ENCODE measurements at regions of chr3 and their contacts with region 1.

Region 1: DNA sequence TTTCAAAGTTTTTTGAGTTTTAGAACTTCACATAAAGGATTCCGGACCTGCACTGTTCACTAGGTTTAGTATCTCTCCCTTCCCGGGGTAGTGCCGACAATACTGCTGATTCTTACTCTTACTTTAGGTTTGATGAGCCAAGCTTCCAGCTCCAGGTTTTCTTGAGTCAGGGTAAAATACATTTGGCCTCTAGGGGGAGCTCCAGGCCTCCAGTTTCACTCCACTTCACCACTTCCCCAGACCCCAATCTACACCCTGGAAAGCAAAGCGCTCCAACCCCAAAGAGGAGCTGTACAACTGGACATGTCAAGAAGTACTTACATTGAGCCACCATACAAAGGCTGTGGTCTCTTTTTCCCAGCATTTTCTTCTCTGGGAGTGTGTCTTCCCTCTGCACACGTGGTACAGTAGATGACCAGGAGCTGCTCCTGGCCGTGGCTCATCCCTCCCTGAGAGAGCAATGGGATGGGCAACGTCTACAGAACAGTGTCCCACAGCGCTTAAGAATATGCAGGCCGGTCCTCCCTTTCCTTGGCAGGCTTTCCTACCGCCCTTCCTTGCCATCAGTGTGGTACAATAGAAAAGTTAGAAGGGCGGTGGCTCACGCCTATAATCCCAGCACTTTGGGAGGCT is 93.9 kb upstream of the CCDC80 start:
- DNase-seq: no peak
- H3K4me3 ChIP-seq: no peak overlapping the region
- CTCF ChIP-seq: peak; percentile 57

Region 2: GRCh38 chr3:112635671-112636070 is 99.2 kb before region 1 on chr3:
- CTCF ChIA-PET with region 1: interaction called, 104 read pairs
- POLR2A ChIA-PET with region 1: no interaction called
- DNase-seq: peak; percentile 69
- H3K4me3 ChIP-seq: peak overlapping the region; percentile 74
- CTCF ChIP-seq: peak; percentile 4

Region 3: GRCh38 chr3:112709911-112710310 is 24.9 kb before region 1 on chr3:
- CTCF ChIA-PET with region 1: interaction called, 37 read pairs
- POLR2A ChIA-PET with region 1: no interaction called
- DNase-seq: no peak
- H3K4me3 ChIP-seq: no peak overlapping the region
- CTCF ChIP-seq: no peak

Region 4: GRCh38 chr3:112751564-112752512 is 17.0 kb after region 1 on chr3:
- CTCF ChIA-PET with region 1: interaction called, 101 read pairs
- POLR2A ChIA-PET with region 1: no interaction called
- DNase-seq: no peak
- H3K4me3 ChIP-seq: no peak overlapping the region
- CTCF ChIP-seq: no peak

Region 5: GRCh38 chr3:112773864-112774590 is 39.2 kb after region 1 on chr3:
- CTCF ChIA-PET with region 1: interaction called, 12 read pairs
- POLR2A ChIA-PET with region 1: interaction called, 4 read pairs
- DNase-seq: peak; percentile 69
- H3K4me3 ChIP-seq: no peak overlapping the region
- CTCF ChIP-seq: no peak

Region 6: DNA sequence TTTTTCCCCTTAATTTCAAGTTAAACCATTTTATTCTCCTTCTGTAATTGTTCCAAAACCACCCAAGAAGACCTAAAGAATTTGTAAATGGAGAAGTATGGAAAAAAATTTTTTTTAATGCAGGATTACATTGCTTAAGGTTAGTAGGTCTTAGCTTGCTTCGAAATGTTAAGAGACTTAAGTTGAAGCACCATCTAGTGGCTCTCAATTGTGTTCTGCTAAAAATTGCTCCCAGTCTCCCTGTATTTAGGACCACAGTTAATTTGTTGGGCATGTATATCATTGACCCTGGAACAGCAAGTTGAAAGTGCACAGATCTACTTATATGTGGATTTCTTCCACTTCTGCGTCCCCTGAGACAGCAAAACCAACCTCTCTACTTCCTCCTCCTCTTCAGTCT is 79.4 kb after region 1 on chr3:
- CTCF ChIA-PET with region 1: interaction called, 128 read pairs
- POLR2A ChIA-PET with region 1: interaction called, 9 read pairs
- DNase-seq: peak; percentile 69
- H3K4me3 ChIP-seq: no peak overlapping the region
- CTCF ChIP-seq: peak; percentile 56

Region 7: DNA sequence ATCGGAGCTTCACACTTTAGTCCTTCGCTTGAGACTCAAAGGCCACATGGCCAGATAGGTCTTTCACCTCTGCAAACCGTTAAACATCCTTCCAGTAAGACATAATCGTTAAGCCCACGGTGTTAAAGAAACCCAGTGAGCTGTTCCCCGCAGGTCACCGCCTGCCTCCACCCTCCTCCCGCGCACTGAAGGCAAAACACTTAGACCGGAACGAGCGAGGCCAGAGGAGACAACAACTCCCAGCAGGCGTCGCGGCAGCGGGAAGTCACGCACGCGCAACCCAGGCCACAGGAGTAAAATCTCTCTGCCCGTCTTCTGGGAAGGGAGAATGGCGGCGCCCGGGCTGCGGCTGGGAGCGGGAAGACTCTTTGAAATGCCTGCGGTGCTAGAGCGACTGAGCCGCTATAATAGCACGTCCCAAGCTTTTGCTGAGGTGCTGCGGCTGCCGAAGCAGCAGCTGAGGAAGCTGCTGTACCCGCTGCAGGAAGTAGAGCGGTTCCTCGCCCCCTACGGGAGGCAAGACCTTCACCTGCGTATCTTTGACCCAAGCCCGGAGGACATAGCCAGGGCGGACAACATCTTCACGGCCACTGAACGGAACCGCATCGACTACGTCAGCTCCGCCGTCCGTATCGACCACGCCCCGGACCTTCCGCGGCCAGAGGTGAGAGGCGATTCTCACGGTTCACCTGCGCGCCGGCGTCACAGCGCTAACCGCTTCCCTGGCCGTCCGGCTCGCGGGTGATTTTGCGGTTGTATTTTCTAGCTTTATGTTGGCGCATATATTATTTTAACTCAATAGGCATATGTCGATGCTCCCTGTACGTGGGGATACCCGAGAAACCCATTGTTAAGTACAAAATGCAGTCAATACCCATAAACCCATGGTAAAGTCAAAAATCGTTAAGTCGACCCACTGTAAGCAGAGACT is 256.1 kb after region 1 on chr3 and contains the start of gene GTPBP8:
- CTCF ChIA-PET with region 1: interaction called, 11 read pairs
- POLR2A ChIA-PET with region 1: no interaction called
- DNase-seq: peak; percentile 29
- H3K4me3 ChIP-seq: peak within 1 kb of the TSS; percentile 96
- CTCF ChIP-seq: peak; percentile 18

Measured in AG04449 (cell line).